ENCODE measurements at regions of chr3 and their contacts with region 1.

Region 1: DNA sequence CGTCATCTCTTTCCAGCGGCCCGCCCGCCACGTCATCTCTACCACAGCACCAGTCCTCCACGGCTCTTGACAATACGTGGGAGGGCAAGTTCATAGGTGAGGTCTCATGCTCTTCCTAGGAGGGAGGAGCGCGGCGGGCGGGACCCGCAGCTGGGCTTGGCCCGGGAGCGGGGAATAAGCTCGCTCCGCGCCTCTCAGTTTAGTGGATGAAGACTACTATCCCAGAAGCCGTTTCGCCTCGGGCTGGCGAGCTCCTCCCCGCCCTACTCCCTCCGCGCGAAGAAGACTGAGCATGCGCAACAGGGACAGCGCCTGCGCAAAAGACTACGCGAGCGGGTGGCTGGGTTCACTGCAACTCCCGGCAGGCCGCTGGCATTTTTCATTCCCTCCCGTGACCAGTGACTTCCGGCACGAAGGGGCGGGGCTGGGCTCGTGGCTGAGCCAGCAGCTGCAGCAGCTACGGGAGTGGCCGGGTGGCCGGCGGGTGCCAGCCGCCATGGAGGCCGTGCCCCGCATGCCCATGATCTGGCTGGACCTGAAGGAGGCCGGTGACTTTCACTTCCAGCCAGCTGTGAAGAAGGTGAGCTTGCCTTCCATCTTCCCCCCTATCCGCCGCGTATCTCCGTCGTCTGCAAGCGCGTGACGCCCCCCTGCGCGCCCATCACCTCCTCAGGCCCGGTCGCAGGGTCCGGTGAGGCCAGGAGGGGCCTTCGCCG is at the start of gene PTPN23:
- DNase-seq: peak; percentile 99
- H3K4me3 Mint-ChIP-seq: peak within 1 kb of the TSS; percentile 99
- H3K27ac Mint-ChIP-seq: peak within 1 kb of the TSS; percentile 98
- H3K4me1 Mint-ChIP-seq: peaks cover 47% of the 10 kb centered on the region
- H3K27me3 Mint-ChIP-seq: no peaks in the 10 kb centered on the region
- total RNA-seq, gene PTPN23: 27.9 to 29.7 TPM

Region 2: GRCh38 chr3:47016934-47017435 is 363.8 kb before region 1 on chr3:
- CTCF ChIA-PET with region 1: no interaction called
- POLR2A ChIA-PET with region 1: no interaction called
- intact Hi-C with region 1: loop called (anchors 5 kb)
- DNase-seq: peak; percentile 71
- H3K4me3 Mint-ChIP-seq: peak overlapping the region; percentile 8
- H3K27ac Mint-ChIP-seq: peak overlapping the region; percentile 92
- H3K4me1 Mint-ChIP-seq: peaks cover 47% of the 10 kb centered on the region
- H3K27me3 Mint-ChIP-seq: no peaks in the 10 kb centered on the region

Region 3: DNA sequence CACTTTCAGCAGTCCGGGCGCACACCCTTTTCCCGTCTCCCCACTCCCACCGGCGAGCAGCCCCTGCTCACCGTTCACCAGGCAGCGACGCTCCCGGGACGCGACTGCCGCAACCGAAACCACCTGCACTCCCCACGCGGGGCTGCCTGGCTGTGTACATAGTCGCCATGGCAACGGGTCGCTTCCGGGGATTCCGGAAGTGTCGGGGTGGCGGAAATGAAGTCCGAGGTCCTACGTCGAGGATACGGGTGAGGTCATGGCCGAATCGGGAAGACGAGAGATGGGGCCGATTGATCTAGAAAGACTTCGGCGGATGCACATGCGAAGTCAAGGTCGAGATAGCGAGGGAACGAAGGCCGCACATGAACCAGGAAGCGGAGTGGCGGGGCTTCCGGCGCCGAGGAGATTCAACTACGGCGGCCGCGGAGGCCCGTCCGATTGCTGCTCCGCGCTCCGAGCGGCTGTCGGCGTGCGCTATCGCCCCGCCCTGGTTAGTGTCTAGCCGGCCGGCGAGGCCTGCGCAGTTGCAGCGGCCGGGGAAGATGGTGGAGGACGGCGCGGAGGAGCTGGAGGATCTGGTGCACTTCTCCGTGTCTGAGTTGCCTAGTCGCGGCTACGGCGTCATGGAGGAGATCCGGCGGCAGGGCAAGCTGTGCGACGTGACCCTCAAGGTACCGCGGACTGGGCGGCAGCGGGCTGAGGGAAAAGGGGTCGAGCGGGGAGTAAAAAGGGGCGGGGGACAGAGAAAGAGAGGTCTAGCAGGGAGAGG is 98.2 kb before region 1 on chr3 and contains the starts of genes KIF9 and KLHL18:
- CTCF ChIA-PET with region 1: no interaction called
- POLR2A ChIA-PET with region 1: interaction called, 6 read pairs
- intact Hi-C with region 1: loop called (anchors 2 kb)
- DNase-seq: peak; percentile 97
- H3K4me3 Mint-ChIP-seq: peak within 1 kb of the TSS; percentile 98
- H3K27ac Mint-ChIP-seq: peak within 1 kb of the TSS; percentile 100
- H3K4me1 Mint-ChIP-seq: peaks cover 39% of the 10 kb centered on the region
- H3K27me3 Mint-ChIP-seq: peaks cover 3% of the 10 kb centered on the region
- total RNA-seq, gene KIF9: 3.3 to 4.9 TPM
- total RNA-seq, gene KLHL18: 21.2 to 23.7 TPM

Region 4: GRCh38 chr3:47420511-47421484 is 40.0 kb after region 1 on chr3:
- CTCF ChIA-PET with region 1: interaction called, 14 read pairs
- POLR2A ChIA-PET with region 1: interaction called, 4 read pairs
- intact Hi-C with region 1: no loop called
- DNase-seq: peak; percentile 95
- H3K4me3 Mint-ChIP-seq: peak overlapping the region; percentile 54
- H3K27ac Mint-ChIP-seq: peak overlapping the region; percentile 94
- H3K4me1 Mint-ChIP-seq: peaks cover 12% of the 10 kb centered on the region
- H3K27me3 Mint-ChIP-seq: no peaks in the 10 kb centered on the region

Region 5: DNA sequence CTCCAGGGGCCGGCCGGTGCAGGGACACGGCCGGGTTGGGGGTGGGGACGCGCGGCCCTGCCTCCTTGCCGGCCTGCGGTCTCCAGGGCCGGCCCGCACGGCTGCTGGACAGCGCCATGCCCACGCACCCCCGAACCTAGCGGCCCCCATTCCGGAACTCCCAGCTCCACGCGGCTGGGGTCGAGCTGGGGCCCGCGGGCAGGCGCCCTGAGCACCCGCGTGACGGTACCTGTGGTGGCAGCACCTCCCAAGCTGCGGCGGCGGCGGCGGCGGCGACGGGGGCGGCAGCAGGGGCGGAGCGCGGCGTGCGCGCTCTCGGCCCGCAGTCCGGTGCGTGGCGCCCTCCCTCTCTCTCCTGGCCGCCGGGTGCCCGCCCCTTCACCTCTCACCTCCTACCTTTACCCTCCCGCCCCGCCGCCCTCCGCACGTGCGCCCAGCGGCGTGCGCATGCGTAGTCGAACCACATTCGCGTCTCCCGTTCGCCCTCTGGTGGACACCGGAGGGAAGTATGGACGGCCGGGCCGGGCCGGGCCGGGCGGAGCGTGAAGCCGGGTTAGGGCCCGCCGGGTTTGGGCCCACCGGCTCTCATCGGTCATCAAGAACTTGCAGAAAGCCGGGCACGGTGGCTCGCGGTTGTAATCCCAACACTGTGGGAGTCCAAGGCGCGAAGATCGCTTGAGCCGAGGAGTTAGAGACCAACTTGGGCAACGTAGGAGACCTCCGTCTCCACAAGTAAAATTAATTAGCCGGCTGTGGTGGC is 95.0 kb after region 1 on chr3 and contains the start of gene SCAP:
- CTCF ChIA-PET with region 1: interaction called, 4 read pairs
- POLR2A ChIA-PET with region 1: interaction called, 10 read pairs
- intact Hi-C with region 1: no loop called
- DNase-seq: peak; percentile 97
- H3K4me3 Mint-ChIP-seq: peak within 1 kb of the TSS; percentile 86
- H3K27ac Mint-ChIP-seq: peak within 1 kb of the TSS; percentile 81
- H3K4me1 Mint-ChIP-seq: peaks cover 33% of the 10 kb centered on the region
- H3K27me3 Mint-ChIP-seq: no peaks in the 10 kb centered on the region
- total RNA-seq, gene SCAP: 44.5 to 44.6 TPM

Region 6: GRCh38 chr3:47791193-47791855 is 410.6 kb after region 1 on chr3:
- CTCF ChIA-PET with region 1: no interaction called
- POLR2A ChIA-PET with region 1: no interaction called
- intact Hi-C with region 1: loop called (anchors 2 kb)
- DNase-seq: no peak
- H3K4me3 Mint-ChIP-seq: no peak overlapping the region
- H3K27ac Mint-ChIP-seq: no peak overlapping the region
- H3K4me1 Mint-ChIP-seq: no peaks in the 10 kb centered on the region
- H3K27me3 Mint-ChIP-seq: no peaks in the 10 kb centered on the region

Region 7: GRCh38 chr3:48088749-48089466 is 708.1 kb after region 1 on chr3:
- CTCF ChIA-PET with region 1: no interaction called
- POLR2A ChIA-PET with region 1: no interaction called
- intact Hi-C with region 1: loop called (anchors 5 kb)
- DNase-seq: peak; percentile 96
- H3K4me3 Mint-ChIP-seq: peak overlapping the region; percentile 93
- H3K27ac Mint-ChIP-seq: peak overlapping the region; percentile 89
- H3K4me1 Mint-ChIP-seq: peaks cover 32% of the 10 kb centered on the region
- H3K27me3 Mint-ChIP-seq: no peaks in the 10 kb centered on the region

Measured in activated CD4-positive, alpha-beta memory T cell treated with anti-CD3 and anti-CD28 coated beads for 36 hours (primary cell).